Calu3 (cell line): ENCODE measurements at regions of chr6 and their contacts with region 1.

Region 1: GRCh38 chr6:37538107-37538506 is 38.4 kb upstream of the CCDC167 start:
- DNase-seq: peak; percentile 79
- H3K4me3 Mint-ChIP-seq: no peak overlapping the region
- H3K27ac Mint-ChIP-seq: no peak overlapping the region
- H3K4me1 Mint-ChIP-seq: no peaks in the 10 kb centered on the region
- H3K27me3 Mint-ChIP-seq: peaks cover 98% of the 10 kb centered on the region
- CTCF ChIP-seq: peak; percentile 75

Region 2: DNA sequence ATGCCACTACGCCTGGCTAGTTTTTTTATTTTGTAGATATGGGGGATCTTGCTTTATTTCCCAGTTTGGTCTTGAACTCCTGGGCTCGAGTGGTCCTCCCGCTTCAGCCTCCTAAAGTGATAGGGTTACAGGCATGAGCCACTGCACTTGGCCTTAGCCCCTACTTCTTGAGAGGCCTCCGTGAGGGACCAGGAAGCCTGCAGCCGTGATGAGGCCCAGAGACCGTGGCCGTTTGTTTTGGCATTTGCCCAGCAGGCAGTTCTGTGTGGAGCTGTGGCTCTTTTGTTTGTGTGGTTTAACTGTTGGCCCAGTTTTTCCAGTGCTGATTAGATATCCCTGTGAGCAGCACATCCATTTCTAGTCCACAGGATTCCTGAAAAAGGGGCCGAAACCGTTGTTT is 904.2 kb before region 1 on chr6:
- CTCF ChIA-PET with region 1: no interaction called
- intact Hi-C with region 1: no loop called
- DNase-seq: peak; percentile 68
- H3K4me3 Mint-ChIP-seq: no peak overlapping the region
- H3K27ac Mint-ChIP-seq: no peak overlapping the region
- H3K4me1 Mint-ChIP-seq: peaks cover 20% of the 10 kb centered on the region
- H3K27me3 Mint-ChIP-seq: no peaks in the 10 kb centered on the region
- CTCF ChIP-seq: no peak

Region 3: DNA sequence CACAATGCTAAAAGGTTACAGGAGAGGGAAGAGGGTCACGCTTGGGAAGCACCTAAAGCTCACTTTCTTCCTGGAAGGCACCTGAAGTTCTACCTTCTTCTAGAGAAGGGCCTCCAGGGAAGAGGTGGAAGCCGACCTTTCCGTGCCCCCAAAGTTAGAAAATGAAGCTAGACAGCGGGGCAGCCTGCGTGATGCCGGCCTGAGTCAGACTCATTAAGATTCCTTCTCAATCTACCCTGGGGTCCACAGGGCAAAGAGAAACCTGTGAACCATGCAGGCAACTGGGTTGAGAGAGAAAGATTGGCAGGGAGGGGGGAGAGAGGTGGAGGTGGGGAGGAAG is 16.3 kb after region 1 on chr6:
- CTCF ChIA-PET with region 1: interaction called, 15 read pairs
- intact Hi-C with region 1: no loop called
- DNase-seq: peak; percentile 28
- H3K4me3 Mint-ChIP-seq: peak overlapping the region; percentile 23
- H3K27ac Mint-ChIP-seq: no peak overlapping the region
- H3K4me1 Mint-ChIP-seq: peaks cover 37% of the 10 kb centered on the region
- H3K27me3 Mint-ChIP-seq: peaks cover 27% of the 10 kb centered on the region
- CTCF ChIP-seq: no peak

Region 4: DNA sequence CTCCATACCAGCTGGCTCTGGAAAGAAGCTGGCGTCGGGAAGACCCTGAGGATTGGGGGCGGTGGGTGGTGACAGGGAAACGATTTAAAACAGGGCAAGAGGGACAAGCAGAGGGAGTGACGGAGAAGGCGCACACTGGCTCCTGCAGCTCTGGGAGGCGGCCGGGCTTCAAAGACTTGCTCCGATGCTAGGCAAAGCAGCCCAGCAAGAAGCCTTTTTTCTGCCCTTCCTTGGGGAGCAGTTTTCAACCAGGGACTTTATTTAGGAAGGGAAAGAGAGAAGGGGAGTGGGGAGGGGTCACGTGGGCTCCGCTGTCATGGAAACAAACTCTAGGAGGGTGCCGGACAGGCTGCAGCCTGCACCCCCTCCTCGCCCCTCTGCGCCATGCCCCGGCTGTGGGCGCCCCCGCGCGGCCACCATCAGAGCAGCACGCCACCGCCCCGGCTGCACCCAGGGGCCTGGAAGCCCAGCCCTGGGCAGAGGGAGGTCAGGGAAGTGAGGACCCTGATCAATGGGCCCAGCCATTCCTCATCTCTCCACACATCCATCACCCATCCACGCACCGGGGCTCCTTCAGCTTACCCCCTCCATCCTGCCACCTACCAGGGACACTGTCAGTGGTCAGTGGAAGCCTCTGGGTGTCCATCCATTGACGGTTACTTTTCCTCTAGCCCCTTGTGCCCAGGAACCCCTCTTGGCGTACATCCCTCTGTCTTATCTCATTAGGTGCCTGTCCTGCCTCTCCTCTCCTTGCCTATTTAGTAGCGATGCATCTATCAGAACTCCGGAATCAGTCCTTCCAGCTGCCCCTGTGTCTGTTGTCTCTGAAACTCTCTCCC is 28.2 kb after region 1 on chr6:
- CTCF ChIA-PET with region 1: interaction called, 16 read pairs
- intact Hi-C with region 1: no loop called
- DNase-seq: peak; percentile 81
- H3K4me3 Mint-ChIP-seq: no peak overlapping the region
- H3K27ac Mint-ChIP-seq: no peak overlapping the region
- H3K4me1 Mint-ChIP-seq: no peaks in the 10 kb centered on the region
- H3K27me3 Mint-ChIP-seq: peaks cover 89% of the 10 kb centered on the region
- CTCF ChIP-seq: peak; percentile 96

Region 5: DNA sequence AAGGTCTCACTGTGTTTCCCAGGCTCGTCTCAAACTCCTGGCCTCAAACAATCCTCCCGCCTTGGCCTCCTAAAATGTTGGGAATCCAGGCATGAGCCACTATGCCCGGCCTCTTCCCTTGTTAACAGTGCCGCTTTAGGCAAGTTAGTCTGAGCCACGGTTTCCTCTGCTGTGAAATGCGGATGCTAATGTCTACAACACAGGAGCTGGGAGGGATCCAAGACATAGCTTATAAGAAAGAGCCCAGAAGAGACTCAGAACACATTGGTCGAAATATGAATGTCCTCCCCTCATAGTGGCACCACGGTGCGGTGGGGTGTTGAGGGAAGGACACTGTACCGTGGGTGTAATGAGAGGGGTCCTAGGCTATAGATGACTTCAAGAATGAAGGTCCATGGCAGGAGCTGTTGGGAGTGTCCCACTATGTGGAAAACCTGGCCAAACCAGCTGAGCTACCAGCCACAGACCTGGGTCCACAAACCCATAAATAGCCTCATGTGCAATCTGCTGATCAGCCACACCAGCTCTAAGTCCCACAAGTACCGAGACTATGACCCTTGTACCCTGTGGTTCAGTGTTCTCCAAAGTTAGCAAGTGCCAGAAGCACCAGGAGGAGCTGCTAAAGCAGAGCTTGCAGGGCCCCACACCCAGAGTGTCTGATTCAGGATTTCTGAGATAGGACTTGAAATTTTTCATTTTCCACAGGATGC is 223.6 kb after region 1 on chr6:
- CTCF ChIA-PET with region 1: no interaction called
- intact Hi-C with region 1: no loop called
- DNase-seq: no peak
- H3K4me3 Mint-ChIP-seq: no peak overlapping the region
- H3K27ac Mint-ChIP-seq: no peak overlapping the region
- H3K4me1 Mint-ChIP-seq: no peaks in the 10 kb centered on the region
- H3K27me3 Mint-ChIP-seq: peaks cover 19% of the 10 kb centered on the region
- CTCF ChIP-seq: no peak